ENCODE measurements at regions of chr1 and their contacts with region 1.

Region 1: GRCh38 chr1:150979092-150980056 is 2.7 kb upstream of the ANXA9 start:
- DNase-seq: peak; percentile 90
- CTCF ChIP-seq: peak; percentile 100

Region 2: DNA sequence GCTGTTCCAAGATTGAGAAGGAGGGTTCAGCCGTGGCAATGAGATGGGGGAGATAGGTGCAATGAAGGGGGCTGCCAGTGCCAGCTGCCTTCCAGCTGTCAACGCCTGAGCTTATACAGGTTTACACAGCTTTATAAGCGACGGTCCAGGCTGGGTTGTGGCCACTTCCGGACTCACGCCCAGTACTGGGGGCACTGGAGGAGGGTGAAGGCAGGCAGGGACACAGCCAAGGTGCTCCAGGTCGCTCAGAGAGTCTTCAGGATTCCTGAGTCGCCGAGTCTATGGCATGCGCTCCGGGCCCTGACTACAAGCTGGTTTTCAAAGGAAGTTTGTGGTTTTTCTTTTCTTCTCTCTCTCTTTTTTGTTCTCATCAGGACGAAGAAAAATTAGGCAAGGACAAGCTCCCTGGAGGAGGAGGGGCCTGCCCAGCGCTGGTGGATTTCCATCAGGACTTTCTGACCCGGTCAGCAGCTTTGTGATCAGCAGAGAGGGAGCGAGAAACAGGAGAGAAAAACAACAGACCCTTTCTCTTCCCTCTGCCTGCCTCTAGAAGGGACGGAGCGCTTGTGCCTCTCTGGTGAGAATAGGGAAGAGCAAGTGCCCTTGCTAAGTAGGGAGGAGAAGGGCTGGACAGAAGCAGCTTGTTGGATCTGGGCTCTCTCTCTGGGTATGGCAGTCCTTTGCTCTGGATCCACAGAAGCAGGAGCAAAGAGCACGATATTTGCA is 27.1 kb after region 1 on chr1 and contains the start of gene MINDY1:
- CTCF ChIA-PET with region 1: interaction called, 158 read pairs
- POLR2A ChIA-PET with region 1: no interaction called
- DNase-seq: peak; percentile 71
- CTCF ChIP-seq: peak; percentile 28

Region 3: GRCh38 chr1:151210830-151211229 is 231.5 kb after region 1 on chr1:
- CTCF ChIA-PET with region 1: no interaction called
- POLR2A ChIA-PET with region 1: no interaction called
- DNase-seq: no peak
- CTCF ChIP-seq: no peak